ENCODE measurements at regions of chrX and their contacts with region 1.

Region 1: GRCh38 chrX:9464435-9465371 is at the start of gene TBL1X:
- DNase-seq: no peak
- H3K4me3 ChIP-seq: peak within 1 kb of the TSS; percentile 65 to 78 (median 71)
- H3K27ac ChIP-seq: peak within 1 kb of the TSS; percentile 89 to 91 (median 90)
- H3K4me1 ChIP-seq: peaks cover 10 to 64% (median 44%) of the 10 kb centered on the region in 4 donors
- H3K27me3 ChIP-seq: no peaks in the 10 kb centered on the region
- CTCF ChIP-seq: no peak
- EP300 ChIP-seq: no peak
- POLR2A ChIP-seq: no peak
- total RNA-seq, gene TBL1X: 25.3 to 54.1 (median 38.2) TPM

Region 2: GRCh38 chrX:9133426-9133825 is 331.3 kb before region 1 on chrX:
- intact Hi-C with region 1: no loop called
- DNase-seq: no peak
- H3K4me3 ChIP-seq: no peak overlapping the region
- H3K27ac ChIP-seq: no peak overlapping the region
- H3K4me1 ChIP-seq: no peaks in the 10 kb centered on the region
- H3K27me3 ChIP-seq: no peaks in the 10 kb centered on the region
- CTCF ChIP-seq: no peak
- EP300 ChIP-seq: no peak
- POLR2A ChIP-seq: no peak

Region 3: GRCh38 chrX:9341291-9342201 is 123.2 kb before region 1 on chrX:
- intact Hi-C with region 1: loop called (anchors 1 kb)
- DNase-seq: peak; percentile 91
- H3K4me3 ChIP-seq: peak overlapping the region; percentile 22 to 52 (median 32)
- H3K27ac ChIP-seq: peak overlapping the region; percentile 79 to 86 (median 84)
- H3K4me1 ChIP-seq: peaks cover 14 to 43% (median 39%) of the 10 kb centered on the region in 4 donors
- H3K27me3 ChIP-seq: no peaks in the 10 kb centered on the region
- CTCF ChIP-seq: no peak
- EP300 ChIP-seq: no peak
- POLR2A ChIP-seq: no peak

Region 4: GRCh38 chrX:9682456-9682855 is 217.8 kb after region 1 on chrX:
- intact Hi-C with region 1: loop called (anchors 10 kb)
- DNase-seq: no peak
- H3K4me3 ChIP-seq: no peak overlapping the region
- H3K27ac ChIP-seq: no peak overlapping the region
- H3K4me1 ChIP-seq: peaks cover 2 to 12% (median 7%) of the 10 kb centered on the region in 4 donors
- H3K27me3 ChIP-seq: no peaks in the 10 kb centered on the region
- CTCF ChIP-seq: peak; percentile 37 to 49 (median 40)
- EP300 ChIP-seq: no peak
- POLR2A ChIP-seq: no peak

Measured in esophagus muscularis mucosa (tissue), 4 donors.